ENCODE measurements at regions of chr1 and their contacts with region 1.

Region 1: GRCh38 chr1:113072757-113073478 is at the start of gene LRIG2:
- DNase-seq: peak; percentile 99
- H3K4me3 Mint-ChIP-seq: peak within 1 kb of the TSS; percentile 100
- H3K27ac Mint-ChIP-seq: peak within 1 kb of the TSS; percentile 93
- H3K4me1 Mint-ChIP-seq: peaks cover 20% of the 10 kb centered on the region
- H3K27me3 Mint-ChIP-seq: no peaks in the 10 kb centered on the region
- total RNA-seq, gene LRIG2: 11.8 and 12.7 TPM in 2 replicates

Region 2: DNA sequence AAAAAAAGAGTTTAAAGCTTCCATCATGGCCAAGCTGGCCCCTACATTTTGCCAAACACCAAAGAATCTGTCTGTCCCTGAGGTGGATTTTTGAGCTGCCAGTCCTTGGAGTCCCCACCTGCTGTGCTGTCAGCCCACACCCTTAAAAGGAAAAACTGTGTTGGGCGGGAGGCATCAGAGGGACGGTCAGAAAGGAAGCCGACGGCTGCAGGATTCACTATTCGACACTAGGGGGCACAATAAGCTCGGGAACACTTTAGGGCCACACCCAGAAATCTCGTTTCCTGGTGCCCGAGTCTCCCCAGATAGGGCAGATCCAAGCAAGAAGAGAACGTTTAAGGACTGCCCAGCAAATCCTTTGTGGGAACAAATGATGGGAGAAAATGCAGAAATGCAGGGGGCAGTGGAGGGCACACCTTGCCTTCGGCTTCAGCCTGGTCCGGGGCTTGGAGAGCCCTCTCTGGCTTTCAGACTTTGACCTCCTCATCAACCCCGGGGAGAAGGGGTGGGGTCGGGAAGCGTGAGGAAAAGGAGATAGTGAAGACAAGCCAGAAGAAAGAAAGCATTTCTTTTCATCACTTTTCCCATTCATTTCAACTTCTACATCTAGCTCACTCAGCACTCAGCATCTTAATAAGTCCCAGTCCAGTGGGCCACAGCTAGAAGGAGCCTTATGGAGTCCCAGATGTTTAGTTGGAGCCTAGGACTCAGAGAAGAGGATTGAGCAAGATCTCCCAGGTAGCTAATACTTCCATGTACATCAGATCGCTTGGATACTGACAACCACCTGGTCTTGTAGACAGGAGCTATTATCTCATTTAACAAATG is 681.9 kb before region 1 on chr1:
- intact Hi-C with region 1: loop called (anchors 10 kb)
- DNase-seq: peak; percentile 94
- H3K4me3 Mint-ChIP-seq: peak overlapping the region; percentile 80
- H3K27ac Mint-ChIP-seq: peak overlapping the region; percentile 62
- H3K4me1 Mint-ChIP-seq: peaks cover 37% of the 10 kb centered on the region
- H3K27me3 Mint-ChIP-seq: peaks cover 9% of the 10 kb centered on the region

Region 3: DNA sequence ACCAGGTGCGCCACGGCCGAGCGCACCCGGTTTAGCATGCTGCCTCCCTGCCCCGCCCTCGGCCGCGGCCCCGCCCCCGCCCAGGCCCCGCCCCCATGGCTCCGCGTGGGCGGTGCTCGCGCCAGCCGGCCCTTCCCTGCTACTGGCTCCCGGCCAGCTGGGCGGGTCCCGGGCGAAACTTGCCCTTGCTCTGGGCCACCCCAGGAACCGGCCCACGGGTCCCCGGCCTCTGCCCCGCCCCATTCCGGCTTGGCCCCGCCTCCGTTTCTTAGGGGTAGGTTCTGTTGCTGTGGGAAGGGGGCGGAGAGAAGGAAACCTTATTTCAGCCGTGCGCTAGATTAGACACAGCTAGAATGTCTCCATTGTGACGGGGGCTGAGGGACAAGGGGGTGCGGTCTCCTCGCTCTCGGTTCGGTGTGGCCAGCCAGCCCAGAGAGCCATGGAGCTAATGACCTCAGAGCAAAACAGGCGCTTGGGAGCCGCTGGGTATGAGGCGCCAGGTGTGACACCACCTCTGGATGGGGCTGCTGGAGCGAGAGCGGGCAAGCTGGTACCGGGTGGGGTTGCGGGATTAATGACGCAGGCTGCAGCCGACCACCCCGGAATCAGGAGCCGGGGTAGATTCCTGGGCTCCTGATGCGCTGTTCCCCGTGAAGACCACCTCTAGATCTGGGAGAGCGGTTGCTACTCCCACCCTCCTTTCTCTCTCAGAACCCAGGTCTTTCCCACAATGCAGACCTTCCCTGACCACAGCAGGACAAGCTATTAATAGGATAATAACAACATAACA is 357.5 kb before region 1 on chr1 and contains the start of gene PPM1J:
- intact Hi-C with region 1: loop called (anchors 2 kb)
- DNase-seq: peak; percentile 100
- H3K4me3 Mint-ChIP-seq: peak within 1 kb of the TSS; percentile 89
- H3K27ac Mint-ChIP-seq: peak within 1 kb of the TSS; percentile 35
- H3K4me1 Mint-ChIP-seq: peaks cover 29% of the 10 kb centered on the region
- H3K27me3 Mint-ChIP-seq: peaks cover 41% of the 10 kb centered on the region
- total RNA-seq, gene PPM1J: 1.2 and 1.4 TPM in 2 replicates

Region 4: GRCh38 chr1:112881742-112882127 is 191.2 kb before region 1 on chr1:
- intact Hi-C with region 1: loop called (anchors 2 kb)
- DNase-seq: no peak
- H3K4me3 Mint-ChIP-seq: no peak overlapping the region
- H3K27ac Mint-ChIP-seq: no peak overlapping the region
- H3K4me1 Mint-ChIP-seq: peaks cover 3% of the 10 kb centered on the region
- H3K27me3 Mint-ChIP-seq: peaks cover 21% of the 10 kb centered on the region

Region 5: DNA sequence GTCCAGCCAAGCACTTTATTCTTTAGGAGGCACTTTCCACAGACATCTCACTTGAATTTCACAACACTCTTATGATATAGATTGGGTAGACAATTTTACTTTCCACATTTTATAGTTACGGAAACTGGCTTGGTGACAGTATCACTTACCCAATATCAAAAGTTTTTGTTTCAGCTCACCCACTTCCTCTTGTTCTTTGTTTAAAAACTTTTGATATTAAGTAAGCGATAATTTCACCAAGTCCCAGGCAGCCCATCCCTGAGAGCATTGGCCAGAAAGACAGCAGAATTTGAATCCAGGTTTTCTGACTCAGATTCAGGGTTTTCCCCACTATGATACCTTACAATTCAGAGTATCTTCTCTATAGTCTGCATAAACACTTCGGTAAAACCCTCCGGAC is 60.1 kb after region 1 on chr1:
- intact Hi-C with region 1: loop called (anchors 2 kb)
- DNase-seq: no peak
- H3K4me3 Mint-ChIP-seq: no peak overlapping the region
- H3K27ac Mint-ChIP-seq: peak overlapping the region; percentile 43
- H3K4me1 Mint-ChIP-seq: peaks cover 7% of the 10 kb centered on the region
- H3K27me3 Mint-ChIP-seq: no peaks in the 10 kb centered on the region